Caco-2 (cell line): ENCODE measurements at regions of chr10 and their contacts with region 1.

Region 1: GRCh38 chr10:24465891-24466818 is 257.2 kb downstream of the KIAA1217 start:
- DNase-seq: peak; percentile 78
- H3K4me3 ChIP-seq: peak overlapping the region; percentile 37
- H3K4me3 Mint-ChIP-seq: peak overlapping the region; percentile 73
- H3K27ac Mint-ChIP-seq: peak overlapping the region; percentile 71
- H3K4me1 ChIP-seq: peaks cover 52% of the 10 kb centered on the region
- H3K4me1 Mint-ChIP-seq: peaks cover 66% of the 10 kb centered on the region
- H3K27me3 ChIP-seq: no peaks in the 10 kb centered on the region
- H3K27me3 Mint-ChIP-seq: no peaks in the 10 kb centered on the region
- CTCF ChIP-seq: no peak

Region 2: DNA sequence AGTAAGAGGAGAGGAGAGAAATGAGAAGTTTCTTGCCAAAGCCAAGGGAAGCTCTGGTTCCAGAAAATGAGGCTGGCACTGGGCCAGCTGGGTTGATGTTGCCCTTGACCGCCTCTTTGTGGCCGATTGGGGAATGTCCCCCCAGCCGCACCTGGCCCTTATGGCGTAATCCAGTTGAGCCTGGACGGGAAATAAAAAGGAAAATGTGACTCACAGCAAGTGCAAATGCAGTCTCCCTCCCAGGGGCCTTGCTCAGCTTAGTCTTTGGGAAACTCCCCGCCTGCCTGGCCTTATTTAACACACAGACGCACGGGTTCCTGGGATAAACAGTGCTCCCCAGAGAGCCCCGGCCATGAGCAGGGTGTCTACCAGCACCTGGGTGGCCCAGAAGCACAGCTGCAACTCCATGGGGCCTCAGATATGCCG is 82.5 kb before region 1 on chr10:
- CTCF ChIA-PET with region 1: interaction called, 4 read pairs
- POLR2A ChIA-PET with region 1: no interaction called
- intact Hi-C with region 1: loop called (anchors 2 kb)
- DNase-seq: peak; percentile 87 to 90
- H3K4me3 ChIP-seq: no peak overlapping the region
- H3K4me3 Mint-ChIP-seq: peak overlapping the region; percentile 58
- H3K27ac Mint-ChIP-seq: peak overlapping the region; percentile 92
- H3K4me1 ChIP-seq: peaks cover 31% of the 10 kb centered on the region
- H3K4me1 Mint-ChIP-seq: peaks cover 23% of the 10 kb centered on the region
- H3K27me3 ChIP-seq: no peaks in the 10 kb centered on the region
- H3K27me3 Mint-ChIP-seq: no peaks in the 10 kb centered on the region
- CTCF ChIP-seq: peak; percentile 60 to 67

Region 3: DNA sequence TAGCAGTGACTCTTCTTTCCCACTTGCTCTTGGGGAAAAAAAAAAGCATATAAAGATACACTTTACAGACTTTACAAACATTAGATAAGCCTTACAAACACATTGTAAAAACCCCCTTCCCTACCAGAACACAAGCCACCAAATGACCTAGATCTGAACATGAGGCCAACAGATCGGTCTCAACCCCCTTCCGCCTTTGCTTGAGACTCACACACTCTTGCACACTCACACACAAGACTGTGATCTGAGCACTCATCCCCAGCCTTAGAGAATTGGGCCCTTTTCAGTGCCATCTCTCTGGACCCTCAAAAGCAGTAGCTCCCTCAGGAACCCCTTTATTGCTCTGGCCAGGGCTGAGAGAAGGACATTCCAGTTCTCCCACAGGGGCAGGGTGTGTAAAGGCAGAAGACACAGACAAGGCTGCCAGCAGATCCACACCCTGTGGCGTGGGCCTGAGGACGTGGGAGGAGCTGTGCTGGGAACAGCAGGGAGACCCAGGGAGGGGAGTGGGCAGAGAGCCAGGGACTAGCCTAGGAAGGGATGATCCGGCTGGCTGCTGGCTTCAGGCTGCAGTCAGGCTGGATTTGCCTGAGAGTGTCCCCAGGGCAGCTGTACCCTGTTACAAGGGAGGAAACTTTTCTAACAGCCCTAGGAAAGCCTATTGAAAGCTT is 50.6 kb before region 1 on chr10:
- CTCF ChIA-PET with region 1: interaction called, 8 read pairs
- POLR2A ChIA-PET with region 1: no interaction called
- intact Hi-C with region 1: loop called (anchors 10 kb)
- DNase-seq: peak; percentile 51 to 62
- H3K4me3 ChIP-seq: no peak overlapping the region
- H3K4me3 Mint-ChIP-seq: peak overlapping the region; percentile 16
- H3K27ac Mint-ChIP-seq: peak overlapping the region; percentile 63
- H3K4me1 ChIP-seq: peaks cover 44% of the 10 kb centered on the region
- H3K4me1 Mint-ChIP-seq: peaks cover 29% of the 10 kb centered on the region
- H3K27me3 ChIP-seq: no peaks in the 10 kb centered on the region
- H3K27me3 Mint-ChIP-seq: no peaks in the 10 kb centered on the region
- CTCF ChIP-seq: no peak

Region 4: DNA sequence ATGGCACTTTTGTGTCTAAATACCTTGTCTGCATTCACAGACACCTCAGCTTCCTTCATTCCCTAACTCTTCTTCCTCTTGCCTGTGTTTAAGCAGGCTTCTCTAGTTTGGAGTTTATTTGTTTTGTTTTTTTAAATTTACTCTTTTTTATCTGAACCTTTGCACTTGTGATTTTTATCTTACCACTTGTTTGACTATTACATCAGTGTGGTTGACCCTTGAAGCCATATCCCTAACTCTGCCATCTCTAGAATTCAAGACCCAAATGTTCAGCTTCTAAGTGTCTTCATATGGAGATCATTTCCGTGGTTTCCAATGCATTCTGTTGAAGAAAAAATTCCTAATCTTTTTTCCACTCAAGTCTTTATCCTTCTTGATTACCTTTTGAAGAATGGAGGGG is 23.9 kb before region 1 on chr10:
- CTCF ChIA-PET with region 1: no interaction called
- POLR2A ChIA-PET with region 1: interaction called, 6 read pairs
- intact Hi-C with region 1: loop called (anchors 1 kb)
- DNase-seq: no peak
- H3K4me3 ChIP-seq: no peak overlapping the region
- H3K4me3 Mint-ChIP-seq: peak overlapping the region; percentile 57
- H3K27ac Mint-ChIP-seq: peak overlapping the region; percentile 62
- H3K4me1 ChIP-seq: peaks cover 62% of the 10 kb centered on the region
- H3K4me1 Mint-ChIP-seq: peaks cover 73% of the 10 kb centered on the region
- H3K27me3 ChIP-seq: no peaks in the 10 kb centered on the region
- H3K27me3 Mint-ChIP-seq: no peaks in the 10 kb centered on the region
- CTCF ChIP-seq: no peak